HepG2 (cell line): ENCODE measurements at regions of chr7 and their contacts with region 1.

Region 1: DNA sequence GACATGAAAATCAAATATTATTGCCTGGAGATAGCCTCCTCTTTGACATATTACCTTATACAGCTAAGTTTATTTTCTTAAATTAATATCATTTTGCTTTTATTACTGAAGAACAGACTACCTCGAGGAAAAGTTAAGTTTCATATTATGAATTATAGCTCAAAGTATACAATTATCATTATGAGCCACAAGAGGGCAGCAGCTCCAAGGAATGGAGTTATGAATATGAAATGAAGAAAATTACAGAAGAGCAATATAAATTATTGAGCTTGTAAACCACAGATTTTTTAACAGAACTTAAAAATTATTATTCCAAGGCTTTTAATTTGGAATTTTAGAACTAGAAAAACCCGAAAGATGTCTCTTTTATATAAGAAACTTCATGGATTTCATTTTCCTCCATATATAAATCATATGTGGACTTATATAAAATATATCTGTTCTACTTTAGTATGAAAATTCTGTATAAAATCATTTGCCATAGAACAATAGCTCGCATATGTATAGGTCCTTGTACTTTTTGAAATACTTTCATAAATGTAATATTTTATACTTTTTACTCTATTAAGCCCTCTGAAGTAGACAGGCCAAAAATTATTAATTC is 40.1 kb downstream of the IQUB start:
- DNase-seq: peak; percentile 27
- ATAC-seq: no peak
- H3K4me3 ChIP-seq: no peak overlapping the region
- H3K27ac ChIP-seq: no peak overlapping the region
- H3K4me1 ChIP-seq: no peaks in the 10 kb centered on the region
- H3K27me3 ChIP-seq: no peaks in the 10 kb centered on the region
- CTCF ChIP-seq: peak; percentile 56
- EP300 ChIP-seq: no peak
- POLR2A ChIP-seq: no peak
- RAD21 ChIP-seq: no peak

Region 2: GRCh38 chr7:123534383-123535260 is 40.3 kb after region 1 on chr7 and contains the start of gene IQUB:
- CTCF ChIA-PET with region 1: interaction called, 28 read pairs
- POLR2A ChIA-PET with region 1: no interaction called
- in situ Hi-C with region 1: loop called (anchors 5 kb)
- intact Hi-C with region 1: loop called (anchors 1 kb)
- DNase-seq: peak; percentile 92
- ATAC-seq: peak; percentile 91
- H3K4me3 ChIP-seq: peak within 1 kb of the TSS; percentile 67 to 83 (median 78)
- H3K27ac ChIP-seq: peak within 1 kb of the TSS; percentile 66
- H3K4me1 ChIP-seq: peaks cover 6% of the 10 kb centered on the region
- H3K27me3 ChIP-seq: peaks cover 0 to 10% of the 10 kb centered on the region in 2 experiments; a peak in 3 of 5 replicates
- CTCF ChIP-seq: no peak
- EP300 ChIP-seq: no peak
- POLR2A ChIP-seq: no peak
- RAD21 ChIP-seq: no peak
- total RNA-seq, gene IQUB: 0.07 and 0.31 TPM in 2 replicates

Region 3: DNA sequence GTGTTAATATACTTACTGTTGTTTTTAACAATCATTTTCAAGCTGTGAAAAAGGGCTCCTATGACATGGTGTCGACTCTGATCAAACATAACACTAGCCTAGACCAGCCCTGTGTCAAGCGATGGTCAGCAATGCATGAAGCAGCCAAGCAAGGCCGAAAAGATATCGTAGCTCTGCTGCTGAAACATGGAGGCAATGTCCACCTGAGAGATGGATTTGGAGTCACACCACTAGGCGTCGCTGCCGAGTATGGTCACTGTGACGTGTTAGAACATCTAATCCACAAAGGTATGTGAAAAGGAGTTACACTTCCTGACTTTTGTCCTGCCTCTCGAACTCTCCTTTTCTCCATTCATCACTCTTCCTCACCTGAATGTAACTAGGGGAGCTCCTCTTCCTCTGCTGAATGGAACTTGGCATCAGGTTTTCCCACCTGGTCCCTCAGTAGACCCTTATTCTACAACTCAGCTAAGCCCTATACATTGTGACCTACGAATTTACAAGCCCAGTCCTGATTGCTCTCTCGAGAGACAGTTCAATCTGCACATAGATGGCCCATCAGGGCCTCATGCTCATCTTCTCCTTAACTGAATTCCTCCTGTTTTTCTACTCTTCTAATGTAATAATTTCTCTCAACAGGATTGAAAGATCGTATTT is 130.4 kb after region 1 on chr7:
- CTCF ChIA-PET with region 1: no interaction called
- POLR2A ChIA-PET with region 1: no interaction called
- in situ Hi-C with region 1: no loop called
- intact Hi-C with region 1: loop called (anchors 10 kb)
- DNase-seq: peak; percentile 47
- ATAC-seq: peak; percentile 87
- H3K4me3 ChIP-seq: no peak overlapping the region
- H3K27ac ChIP-seq: no peak overlapping the region
- H3K4me1 ChIP-seq: no peaks in the 10 kb centered on the region
- H3K27me3 ChIP-seq: no peaks in the 10 kb centered on the region
- CTCF ChIP-seq: peak; percentile 81
- EP300 ChIP-seq: no peak
- POLR2A ChIP-seq: no peak
- RAD21 ChIP-seq: no peak